Naive thymus-derived CD4-positive, alpha-beta T cell (primary cell): ENCODE measurements at regions of chrX and their contacts with region 1.

Region 1: GRCh38 chrX:10722851-10723250 is 102.5 kb upstream of the MID1 start:
- DNase-seq: peak in 6 of 9 donors; percentile 0 to 22 (median 16)
- ATAC-seq: no peak
- H3K4me3 ChIP-seq: no peak overlapping the region
- H3K4me3 Mint-ChIP-seq: no peak overlapping the region
- H3K27ac ChIP-seq: no peak overlapping the region
- H3K27ac Mint-ChIP-seq: no peak overlapping the region
- H3K4me1 ChIP-seq: no peaks in the 10 kb centered on the region
- H3K4me1 Mint-ChIP-seq: no peaks in the 10 kb centered on the region
- H3K27me3 ChIP-seq: no peaks in the 10 kb centered on the region
- H3K27me3 Mint-ChIP-seq: no peaks in the 10 kb centered on the region

Region 2: GRCh38 chrX:11137543-11138139 is 414.8 kb after region 1 on chrX:
- CTCF ChIA-PET with region 1: no interaction called
- POLR2A ChIA-PET with region 1: no interaction called
- intact Hi-C with region 1: loop called in 1 of 2 experiments (anchors 10 kb)
- DNase-seq: peak in 5 of 9 donors; percentile 21 to 33 (median 29)
- ATAC-seq: no peak
- H3K4me3 ChIP-seq: no peak overlapping the region
- H3K4me3 Mint-ChIP-seq: no peak overlapping the region
- H3K27ac ChIP-seq: no peak overlapping the region
- H3K27ac Mint-ChIP-seq: no peak overlapping the region
- H3K4me1 ChIP-seq: no peaks in the 10 kb centered on the region
- H3K4me1 Mint-ChIP-seq: peaks cover 0 to 4% (median 0%) of the 10 kb centered on the region in 7 donors
- H3K27me3 ChIP-seq: no peaks in the 10 kb centered on the region
- H3K27me3 Mint-ChIP-seq: peaks cover 0 to 6% (median 4%) of the 10 kb centered on the region in 5 donors